Heart left ventricle (tissue), 16 donors: ENCODE measurements at regions of chr9 and their contacts with region 1.

Region 1: GRCh38 chr9:93319992-93320500 is 131.4 kb upstream of the FAM120A start:
- DNase-seq: no peak
- ATAC-seq: peak in 3 of 4 donors; percentile 5 to 21 (median 13)
- H3K4me3 ChIP-seq: no peak overlapping the region
- H3K27ac ChIP-seq: peak overlapping the region in 1 of 12 donors; percentile 5
- H3K4me1 ChIP-seq: no peaks in the 10 kb centered on the region
- H3K27me3 ChIP-seq: peaks cover 0 to 14% (median 0%) of the 10 kb centered on the region in 9 donors
- CTCF ChIP-seq: no peak
- POLR2A ChIP-seq: no peak

Region 2: DNA sequence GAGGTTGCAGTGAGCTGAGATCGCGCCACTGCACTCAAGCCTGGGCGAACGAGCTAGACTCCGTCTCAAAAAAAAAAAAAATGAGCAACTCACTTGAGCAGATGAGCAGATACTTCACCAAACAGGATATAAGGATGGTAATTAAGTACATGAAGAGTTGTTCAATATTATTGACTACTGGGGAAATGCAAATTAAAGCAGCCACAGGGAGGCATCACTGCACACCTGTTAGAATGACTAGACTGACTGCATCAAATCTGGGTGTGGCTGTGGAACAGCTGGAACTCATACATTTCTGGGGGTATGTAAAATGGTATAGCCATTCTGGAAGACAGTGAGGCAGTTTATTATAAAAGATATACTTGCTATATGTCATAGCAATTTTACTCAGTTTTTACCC is 43.1 kb before region 1 on chr9:
- intact Hi-C with region 1: no loop called
- DNase-seq: no peak
- ATAC-seq: no peak
- H3K4me3 ChIP-seq: no peak overlapping the region
- H3K27ac ChIP-seq: no peak overlapping the region
- H3K4me1 ChIP-seq: no peaks in the 10 kb centered on the region
- H3K27me3 ChIP-seq: no peaks in the 10 kb centered on the region
- CTCF ChIP-seq: peak in 1 of 12 donors; percentile 8
- POLR2A ChIP-seq: no peak

Region 3: GRCh38 chr9:93431583-93431991 is 111.5 kb after region 1 on chr9:
- intact Hi-C with region 1: loop called in 1 of 10 experiments (anchors 10 kb)
- DNase-seq: no peak
- ATAC-seq: no peak
- H3K4me3 ChIP-seq: no peak overlapping the region
- H3K27ac ChIP-seq: no peak overlapping the region
- H3K4me1 ChIP-seq: no peaks in the 10 kb centered on the region
- H3K27me3 ChIP-seq: no peaks in the 10 kb centered on the region
- CTCF ChIP-seq: no peak
- POLR2A ChIP-seq: no peak